Dorsolateral prefrontal cortex (tissue), 120 donors: ENCODE measurements at regions of chr4 and their contacts with region 1.

Region 1: GRCh38 chr4:155271557-155271956 is 63.1 kb downstream of the NPY2R start:
- DNase-seq: no peak
- H3K4me3 ChIP-seq: no peak overlapping the region
- H3K27ac ChIP-seq: no peak overlapping the region
- H3K27me3 ChIP-seq: peaks cover 0 to 5% (median 0%) of the 10 kb centered on the region in 45 donors
- CTCF ChIP-seq: no peak

Region 2: GRCh38 chr4:155299103-155299502 is 27.5 kb after region 1 on chr4:
- intact Hi-C with region 1: loop called in 1 of 2 experiments (anchors 2 kb)
- DNase-seq: no peak
- H3K4me3 ChIP-seq: no peak overlapping the region
- H3K27ac ChIP-seq: no peak overlapping the region
- H3K27me3 ChIP-seq: no peaks in the 10 kb centered on the region
- CTCF ChIP-seq: no peak